BJ (cell line): ENCODE measurements at regions of chr1 and their contacts with region 1.

Region 1: DNA sequence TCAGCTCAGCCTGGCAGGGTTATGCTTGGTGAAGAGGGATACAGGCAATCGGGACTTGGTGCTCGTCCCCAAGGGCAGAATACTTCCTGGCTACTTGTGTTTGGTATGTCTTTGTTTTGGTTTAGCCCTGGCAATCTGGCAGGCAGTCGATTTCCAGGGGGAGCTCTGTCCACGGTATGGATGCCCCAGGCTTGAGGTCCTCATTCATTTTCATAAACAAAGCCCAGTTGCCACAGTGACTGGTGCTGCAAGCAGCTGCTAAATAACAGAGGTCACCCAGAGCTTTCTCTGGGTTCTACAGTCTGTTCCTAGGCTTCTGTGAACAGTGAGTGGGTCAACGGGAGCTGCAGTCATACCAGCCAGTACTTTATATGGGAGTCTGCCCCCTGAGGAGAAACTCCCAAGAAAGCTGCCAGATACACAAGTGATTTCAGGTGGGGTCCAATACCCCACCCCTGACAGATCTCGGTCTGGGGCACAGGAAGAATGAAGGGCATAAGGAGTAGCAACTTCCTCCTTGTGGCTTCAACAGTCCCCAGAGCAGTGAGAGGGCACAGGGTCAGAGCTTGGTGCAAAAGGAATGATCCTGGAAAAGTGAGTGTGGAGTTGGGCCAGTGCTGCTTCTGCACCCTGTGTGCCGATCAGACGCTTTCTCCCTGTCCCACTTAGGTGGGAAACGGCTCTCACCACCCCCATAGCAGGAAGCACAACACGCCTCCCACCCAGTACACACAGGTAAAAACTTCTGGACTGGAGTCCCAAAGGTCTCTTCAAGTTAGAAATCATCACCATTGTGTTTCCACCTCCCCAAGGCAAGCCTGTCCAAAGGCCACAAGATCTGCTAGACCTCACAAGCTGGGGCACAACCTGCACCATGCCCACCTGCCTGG is 55.5 kb downstream of the TGFBR3 start:
- DNase-seq: peak; percentile 77
- H3K4me3 ChIP-seq: no peak overlapping the region
- H3K27me3 ChIP-seq: no peaks in the 10 kb centered on the region
- CTCF ChIP-seq: peak; percentile 71

Region 2: GRCh38 chr1:91806769-91807700 is 23.5 kb before region 1 on chr1:
- CTCF ChIA-PET with region 1: interaction called, 24 read pairs
- POLR2A ChIA-PET with region 1: no interaction called
- DNase-seq: no peak
- H3K4me3 ChIP-seq: no peak overlapping the region
- H3K27me3 ChIP-seq: no peaks in the 10 kb centered on the region
- CTCF ChIP-seq: no peak

Region 3: DNA sequence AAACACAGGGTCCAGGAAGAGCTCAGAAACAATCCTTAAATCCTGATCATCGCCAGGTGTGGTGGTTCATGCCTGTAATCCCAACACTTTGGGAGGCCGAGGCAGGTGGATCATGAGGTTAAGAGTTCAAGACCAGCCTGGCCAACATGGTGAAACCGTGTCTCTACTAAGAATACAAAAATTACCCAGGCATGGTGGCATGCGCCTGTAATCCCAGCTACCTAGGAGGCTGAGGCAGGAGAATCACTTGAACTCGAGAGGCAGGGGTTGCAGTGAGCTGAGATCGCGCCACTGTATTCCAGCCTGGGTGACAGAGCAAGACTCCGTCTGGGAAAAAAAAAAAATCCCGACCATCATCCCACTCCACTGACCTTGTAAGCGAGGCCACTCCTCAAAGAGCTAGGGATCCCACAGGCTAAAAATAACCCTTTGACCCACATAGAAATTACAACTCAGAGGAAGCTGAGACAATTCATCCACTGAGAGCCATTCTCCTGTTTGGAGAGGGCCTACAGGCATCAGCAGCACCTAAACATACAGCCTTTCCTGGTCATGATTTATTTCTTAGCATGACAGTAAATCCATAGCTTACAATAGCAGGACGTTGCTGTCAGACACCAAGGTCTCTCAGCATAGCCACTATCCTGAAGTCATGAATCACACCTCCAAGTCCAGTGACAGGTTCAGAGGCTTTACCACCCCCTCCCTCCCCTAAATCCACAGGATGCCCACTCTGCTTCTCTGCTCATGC is 11.3 kb before region 1 on chr1:
- CTCF ChIA-PET with region 1: interaction called, 14 read pairs
- POLR2A ChIA-PET with region 1: no interaction called
- DNase-seq: no peak
- H3K4me3 ChIP-seq: no peak overlapping the region
- H3K27me3 ChIP-seq: no peaks in the 10 kb centered on the region
- CTCF ChIP-seq: no peak

Region 4: DNA sequence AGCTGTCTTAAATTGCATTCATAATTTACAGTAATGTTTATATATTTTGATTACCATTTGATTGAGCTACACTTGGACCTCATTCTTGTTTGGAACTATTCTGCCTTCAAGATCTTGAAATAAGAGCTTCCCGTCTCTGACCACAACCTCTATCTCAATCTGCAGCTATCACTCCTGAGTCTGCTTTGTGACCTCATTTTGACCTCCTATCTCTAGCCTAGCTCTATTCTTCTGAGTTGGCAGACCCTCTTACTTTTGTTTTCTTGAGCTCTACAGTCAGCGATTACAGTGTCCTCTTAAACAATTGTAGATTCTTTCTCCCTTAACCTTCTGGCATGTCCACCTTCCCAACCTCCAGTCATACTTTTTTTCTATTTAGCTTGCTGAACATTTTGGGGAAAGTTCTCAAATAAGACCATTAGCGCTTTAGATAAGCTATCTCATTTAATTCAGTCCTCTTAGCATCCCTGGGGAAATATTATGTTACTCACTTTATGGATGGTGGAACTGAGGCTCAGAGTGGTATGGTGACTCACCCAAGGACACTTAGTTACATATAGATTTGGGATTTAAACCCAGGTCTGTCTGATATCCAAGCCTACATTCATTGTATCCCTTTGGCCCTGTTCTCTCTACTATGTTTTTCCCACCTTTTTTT is 487.5 kb after region 1 on chr1:
- CTCF ChIA-PET with region 1: no interaction called
- POLR2A ChIA-PET with region 1: no interaction called
- DNase-seq: no peak
- H3K4me3 ChIP-seq: no peak overlapping the region
- H3K27me3 ChIP-seq: no peaks in the 10 kb centered on the region
- CTCF ChIP-seq: no peak